Right ventricle myocardium inferior (tissue), 1 donor: ENCODE measurements at regions of chr11 and their contacts with region 1.

Region 1: GRCh38 chr11:46238967-46239800 is 38.3 kb upstream of the CREB3L1 start:
- DNase-seq: peak; percentile 94
- ATAC-seq: peak; percentile 86

Region 2: GRCh38 chr11:46278387-46279125 is 39.4 kb after region 1 on chr11:
- intact Hi-C with region 1: loop called (anchors 2 kb)
- DNase-seq: no peak
- ATAC-seq: peak; percentile 28

Region 3: GRCh38 chr11:46308631-46309419 is 69.6 kb after region 1 on chr11:
- intact Hi-C with region 1: loop called (anchors 1 kb)
- DNase-seq: peak; percentile 88
- ATAC-seq: peak; percentile 73

Region 4: GRCh38 chr11:46367244-46367915 is 128.2 kb after region 1 on chr11:
- intact Hi-C with region 1: loop called (anchors 5 kb)
- DNase-seq: peak; percentile 91
- ATAC-seq: peak; percentile 63